Left colon (tissue), 2 donors: ENCODE measurements at regions of chr16 and their contacts with region 1.

Region 1: DNA sequence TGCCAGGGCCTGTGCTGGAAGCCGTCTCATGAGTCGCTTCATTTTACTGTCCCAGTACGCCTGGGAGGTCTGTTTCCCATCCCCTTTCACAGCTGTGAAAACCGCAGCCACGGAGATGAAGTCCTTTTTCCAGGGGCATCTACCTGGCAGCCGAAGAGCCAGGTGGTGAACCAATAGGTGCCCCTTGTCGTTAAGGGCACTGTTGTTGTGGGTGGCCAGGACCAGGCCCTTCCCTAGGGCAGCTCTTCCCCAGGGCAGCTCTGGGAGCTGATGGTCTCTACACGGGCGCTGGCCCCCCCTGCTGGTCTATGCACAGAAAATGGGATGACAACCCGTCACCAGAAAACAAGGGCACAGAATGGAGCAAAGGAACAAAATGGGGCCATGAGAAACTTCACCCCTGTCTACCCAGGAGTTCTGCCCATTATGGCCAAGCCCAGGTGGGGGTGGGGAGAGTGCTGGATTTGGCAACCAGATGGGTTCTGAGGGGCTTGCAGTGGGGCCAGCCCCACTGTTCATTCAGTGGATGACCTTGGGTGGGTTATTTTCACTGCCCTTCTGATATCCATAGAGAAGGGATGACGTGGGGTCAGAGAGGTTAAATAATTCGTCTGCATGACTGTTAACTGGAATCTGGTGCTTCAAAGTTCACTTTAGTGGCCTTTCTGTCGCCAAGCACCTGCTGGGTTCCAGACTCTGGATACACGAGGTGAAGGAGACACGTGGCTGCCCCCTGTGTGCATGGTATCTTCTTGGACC is 11.5 kb downstream of the RMI2 start:
- DNase-seq: peak; percentile 61 to 85
- ATAC-seq: peak; percentile 92

Region 2: GRCh38 chr16:10964039-10964890 is 392.5 kb before region 1 on chr16:
- intact Hi-C with region 1: loop called in 1 of 2 experiments (anchors 10 kb)
- DNase-seq: peak; percentile 68 to 88
- ATAC-seq: peak; percentile 92

Region 3: GRCh38 chr16:10971560-10971961 is 385.2 kb before region 1 on chr16:
- intact Hi-C with region 1: loop called (anchors 2 to 10 kb)
- DNase-seq: no peak
- ATAC-seq: peak; percentile 72

Region 4: DNA sequence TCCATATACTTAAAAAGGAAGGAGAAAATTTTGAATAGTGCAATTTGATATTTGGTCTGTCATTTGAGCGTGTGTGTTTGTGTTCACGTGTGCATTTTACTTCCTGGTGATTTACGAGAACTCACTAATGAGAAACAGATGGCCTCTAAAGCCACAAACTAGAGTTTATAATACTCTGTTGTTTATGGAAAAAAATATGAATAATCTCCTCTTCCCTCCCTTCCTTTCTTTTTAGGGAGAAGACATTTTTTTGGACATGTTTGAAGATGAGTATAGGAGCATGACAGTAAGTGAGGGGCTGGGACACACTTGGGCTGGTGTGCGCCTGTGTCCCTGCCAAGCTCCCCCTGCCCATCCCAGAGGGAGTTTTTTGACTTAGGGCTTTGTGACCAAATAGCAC is 309.7 kb before region 1 on chr16:
- intact Hi-C with region 1: no loop called
- DNase-seq: peak in 1 of 2 donors; percentile 1
- ATAC-seq: no peak

Region 5: DNA sequence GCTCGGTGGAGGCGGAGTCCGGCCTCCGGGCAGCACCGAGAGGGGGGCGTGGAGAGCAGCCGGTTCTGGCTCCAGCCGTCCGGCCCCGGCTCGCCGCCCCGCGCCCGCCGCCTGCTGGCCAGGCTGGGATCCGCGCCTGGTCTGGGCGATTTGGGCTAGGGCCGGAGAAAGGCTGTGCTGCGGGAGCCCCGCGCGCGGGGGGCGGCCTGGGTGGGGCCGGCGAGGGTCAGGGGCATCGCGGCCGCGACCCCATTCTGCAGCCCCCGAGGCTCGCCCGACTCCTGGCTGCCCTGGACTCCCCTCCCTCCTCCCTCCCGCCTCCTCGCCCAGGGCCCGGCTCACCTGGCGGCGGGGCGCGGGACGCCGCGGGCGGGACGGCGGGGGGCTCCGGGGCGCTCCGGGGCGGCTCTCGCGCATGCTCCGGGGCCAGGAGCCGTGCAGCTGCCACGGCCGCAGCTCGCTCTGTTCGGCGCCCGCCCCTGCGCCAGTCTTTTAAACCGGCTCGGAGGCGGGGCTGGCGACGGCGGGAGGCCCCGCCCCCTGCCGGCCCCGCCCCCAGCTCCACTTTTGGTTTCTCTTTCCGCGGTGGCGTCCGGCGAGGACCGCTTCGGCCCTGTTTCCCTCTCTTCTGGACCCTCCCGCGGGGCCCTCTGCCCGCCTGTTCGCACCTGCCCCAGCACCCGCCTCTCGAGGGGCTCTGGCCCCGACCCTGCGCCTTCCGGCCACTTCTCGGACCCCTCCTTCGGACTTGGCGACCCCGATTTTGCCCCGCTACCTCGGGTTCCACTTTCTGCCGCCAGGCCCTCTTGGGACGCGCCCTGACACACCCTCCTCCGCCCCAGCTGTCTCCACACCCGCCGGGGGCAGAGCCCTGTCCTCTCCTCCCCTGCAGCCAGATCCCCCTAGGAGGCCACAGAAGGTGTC is 100.8 kb before region 1 on chr16 and contains the start of gene SOCS1:
- intact Hi-C with region 1: loop called in 1 of 2 experiments (anchors 5 kb)
- DNase-seq: peak; percentile 87 to 88
- ATAC-seq: peak; percentile 73
- total RNA-seq, gene SOCS1: 4.7 to 4.9 TPM

Region 6: DNA sequence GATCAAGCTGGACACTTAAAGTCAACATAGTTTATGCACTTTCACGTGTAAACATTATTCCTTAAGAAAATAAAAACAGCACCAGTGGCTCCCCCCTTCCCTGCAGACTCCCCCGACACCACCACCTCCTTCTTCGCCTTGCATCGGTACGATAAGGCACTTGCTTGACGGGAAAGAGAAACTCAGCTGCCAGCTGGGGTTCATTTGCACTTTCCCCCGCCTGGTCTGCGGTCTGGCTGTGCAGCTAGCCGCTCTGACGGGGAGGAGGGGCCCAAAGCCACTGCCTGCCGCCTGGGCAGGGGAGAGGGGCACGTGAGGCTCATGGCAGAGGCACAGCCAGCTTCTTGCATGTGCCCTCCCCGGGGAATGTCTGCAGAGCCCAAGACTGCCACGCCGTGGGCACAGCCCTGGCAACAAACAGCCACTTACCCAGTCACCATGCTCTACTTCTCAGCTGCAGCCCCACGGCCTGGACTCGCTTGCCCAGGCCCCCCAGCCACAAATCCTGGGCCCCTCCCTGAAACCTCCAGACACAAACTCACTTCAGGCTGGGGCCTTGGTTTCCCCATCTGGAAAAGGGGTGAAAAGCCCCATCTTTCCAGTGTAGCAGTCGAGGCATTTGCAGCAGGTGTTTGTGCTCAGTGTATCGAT is 59.1 kb before region 1 on chr16:
- intact Hi-C with region 1: no loop called
- DNase-seq: peak; percentile 74 to 75
- ATAC-seq: peak; percentile 92

Region 7: DNA sequence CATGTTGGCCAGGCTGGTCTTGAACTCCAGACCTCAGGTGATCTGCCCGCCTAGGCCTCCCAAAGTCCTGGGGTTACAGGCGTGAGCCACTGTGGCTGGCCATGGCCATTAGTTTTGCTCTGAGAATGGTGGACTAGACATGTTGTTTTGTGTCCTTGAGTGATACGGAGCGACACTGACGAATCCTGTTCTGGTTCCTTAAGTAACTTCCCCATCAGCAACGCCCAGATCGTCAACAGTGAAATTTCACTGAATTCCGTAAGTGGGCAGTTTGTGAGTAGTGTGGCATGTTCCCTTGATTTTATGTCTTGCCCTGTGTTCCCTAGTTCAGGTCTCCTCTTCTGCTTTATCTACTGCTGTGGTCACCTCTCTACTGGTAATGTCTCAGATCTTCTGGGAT is 687.2 kb after region 1 on chr16:
- intact Hi-C with region 1: no loop called
- DNase-seq: no peak
- ATAC-seq: no peak